PC-9 (cell line): ENCODE measurements at regions of chr2 and their contacts with region 1.

Region 1: DNA sequence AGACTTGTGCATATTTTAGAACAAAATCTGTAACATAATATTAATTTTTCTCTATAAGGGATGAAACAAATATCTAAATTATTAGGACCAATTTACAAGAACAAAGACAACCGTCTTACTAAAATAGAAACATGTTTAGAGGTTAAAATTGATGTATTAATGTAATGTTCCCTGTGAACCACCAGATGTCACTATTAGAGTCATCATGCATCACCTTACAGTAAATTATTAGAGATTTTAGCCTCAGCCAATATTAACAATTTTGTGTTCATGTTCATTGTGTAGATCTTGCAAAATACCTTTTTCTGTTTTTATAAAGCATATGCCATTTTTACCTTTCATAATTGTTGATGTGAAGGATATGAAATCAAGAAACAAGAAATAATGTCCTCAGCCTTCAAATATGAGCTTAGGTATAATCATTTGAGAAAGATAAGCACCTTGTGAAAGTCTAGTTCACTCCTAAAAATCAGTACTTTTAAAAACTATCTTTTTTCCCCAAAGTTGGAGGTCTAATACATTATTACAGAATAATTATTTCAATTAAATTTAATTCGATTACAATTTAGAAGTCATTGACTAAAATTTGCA is 344.3 kb upstream of the KCNH7 start:
- DNase-seq: no peak
- H3K4me3 ChIP-seq: no peak overlapping the region
- H3K27ac ChIP-seq: no peak overlapping the region
- H3K4me1 ChIP-seq: no peaks in the 10 kb centered on the region
- H3K27me3 ChIP-seq: no peaks in the 10 kb centered on the region
- CTCF ChIP-seq: peak; percentile 75

Region 2: DNA sequence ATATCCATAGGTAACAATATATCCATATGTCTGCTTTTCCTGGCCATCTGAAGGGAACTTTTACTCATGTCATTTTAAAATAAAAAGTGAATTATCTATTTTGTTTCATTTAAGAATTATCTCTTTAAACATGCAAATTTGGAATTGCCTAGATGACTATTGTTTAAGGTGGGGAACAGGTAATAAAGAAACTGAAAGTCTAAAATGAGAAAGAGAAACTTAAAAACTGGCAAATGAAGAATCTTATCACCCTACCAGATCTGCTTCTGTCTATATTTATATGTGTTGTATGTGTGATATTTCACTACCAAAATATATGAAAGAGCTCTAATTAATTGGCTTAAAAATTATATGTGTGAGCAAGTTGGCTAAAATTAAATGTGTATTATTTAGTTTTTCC is 101.1 kb before region 1 on chr2:
- CTCF ChIA-PET with region 1: no interaction called
- POLR2A ChIA-PET with region 1: no interaction called
- intact Hi-C with region 1: no loop called
- DNase-seq: no peak
- H3K4me3 ChIP-seq: no peak overlapping the region
- H3K27ac ChIP-seq: no peak overlapping the region
- H3K4me1 ChIP-seq: no peaks in the 10 kb centered on the region
- H3K27me3 ChIP-seq: no peaks in the 10 kb centered on the region
- CTCF ChIP-seq: no peak

Region 3: DNA sequence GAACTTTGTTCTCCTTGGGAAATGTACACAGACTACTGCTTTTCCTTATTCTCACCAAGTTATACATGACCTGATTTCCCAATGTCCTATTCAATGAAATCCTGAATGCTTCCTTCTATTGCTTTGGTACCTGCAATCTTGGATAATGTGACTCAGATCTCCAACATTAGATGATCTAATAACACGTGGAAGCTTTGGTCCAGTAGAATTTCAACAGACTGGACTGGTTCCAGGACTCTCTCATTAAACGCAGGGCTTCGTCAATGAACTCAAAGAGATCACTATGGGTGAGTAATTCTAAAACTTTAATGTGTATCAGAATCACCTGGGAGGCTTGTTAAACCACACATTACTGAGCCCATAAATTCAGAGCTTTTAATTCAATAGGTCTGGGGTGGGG is 69.3 kb after region 1 on chr2:
- CTCF ChIA-PET with region 1: interaction called, 12 read pairs
- POLR2A ChIA-PET with region 1: no interaction called
- intact Hi-C with region 1: no loop called
- DNase-seq: no peak
- H3K4me3 ChIP-seq: no peak overlapping the region
- H3K27ac ChIP-seq: no peak overlapping the region
- H3K4me1 ChIP-seq: no peaks in the 10 kb centered on the region
- H3K27me3 ChIP-seq: no peaks in the 10 kb centered on the region
- CTCF ChIP-seq: no peak

Region 4: GRCh38 chr2:164275659-164276058 is 1092.8 kb after region 1 on chr2:
- CTCF ChIA-PET with region 1: no interaction called
- POLR2A ChIA-PET with region 1: no interaction called
- intact Hi-C with region 1: loop called (anchors 10 kb)
- DNase-seq: no peak
- H3K4me3 ChIP-seq: no peak overlapping the region
- H3K27ac ChIP-seq: no peak overlapping the region
- H3K4me1 ChIP-seq: no peaks in the 10 kb centered on the region
- H3K27me3 ChIP-seq: no peaks in the 10 kb centered on the region
- CTCF ChIP-seq: no peak

Region 5: DNA sequence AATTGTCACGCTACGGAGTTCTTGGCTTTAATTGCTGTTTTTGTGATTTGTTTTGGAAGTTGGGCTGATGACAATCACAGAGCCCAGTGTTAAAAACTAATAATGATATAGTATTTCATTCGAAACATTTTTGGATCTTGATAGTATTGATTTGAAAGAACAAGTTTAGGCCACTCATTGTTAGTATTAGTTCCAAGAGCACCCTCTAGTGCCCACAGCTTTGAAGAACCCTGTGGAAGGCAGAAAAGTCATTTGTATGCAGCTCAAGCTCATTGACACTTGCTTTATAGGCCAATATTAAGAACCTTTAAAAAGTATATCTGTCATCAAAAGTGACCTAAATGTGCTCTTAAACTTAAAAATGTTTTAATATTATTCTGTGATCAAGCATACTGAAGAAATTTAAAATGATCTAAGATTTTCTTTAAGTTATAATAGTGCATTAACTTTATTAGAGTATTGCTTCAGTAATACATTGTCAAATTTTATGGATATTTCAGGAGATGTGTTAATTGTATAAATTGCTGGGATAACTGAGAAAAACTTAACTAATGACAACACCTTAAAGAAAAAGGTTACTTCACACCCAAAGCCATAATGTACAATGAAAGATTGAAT is 1247.4 kb after region 1 on chr2:
- CTCF ChIA-PET with region 1: no interaction called
- POLR2A ChIA-PET with region 1: no interaction called
- intact Hi-C with region 1: loop called (anchors 5 kb)
- DNase-seq: peak in 1 of 2 experiments; percentile 7
- H3K4me3 ChIP-seq: no peak overlapping the region
- H3K27ac ChIP-seq: no peak overlapping the region
- H3K4me1 ChIP-seq: no peaks in the 10 kb centered on the region
- H3K27me3 ChIP-seq: no peaks in the 10 kb centered on the region
- CTCF ChIP-seq: peak; percentile 67